Activated naive CD4-positive, alpha-beta T cell treated with anti-CD3 and anti-CD28 coated beads for 36 hours (primary cell): ENCODE measurements at regions of chr6 and their contacts with region 1.

Region 1: GRCh38 chr6:137944793-137945498 is 77.9 kb downstream of the TNFAIP3 start:
- DNase-seq: peak; percentile 46
- H3K4me3 Mint-ChIP-seq: no peak overlapping the region
- H3K27ac Mint-ChIP-seq: peak overlapping the region; percentile 0
- H3K4me1 Mint-ChIP-seq: peaks cover 56% of the 10 kb centered on the region
- H3K27me3 Mint-ChIP-seq: no peaks in the 10 kb centered on the region

Region 2: GRCh38 chr6:137707590-137708360 is 237.2 kb before region 1 on chr6:
- CTCF ChIA-PET with region 1: interaction called, 20 read pairs
- intact Hi-C with region 1: loop called (anchors 1 kb)
- DNase-seq: peak; percentile 89
- H3K4me3 Mint-ChIP-seq: peak overlapping the region; percentile 58
- H3K27ac Mint-ChIP-seq: peak overlapping the region; percentile 86
- H3K4me1 Mint-ChIP-seq: peaks cover 58% of the 10 kb centered on the region
- H3K27me3 Mint-ChIP-seq: no peaks in the 10 kb centered on the region

Region 3: GRCh38 chr6:137873273-137873762 is 71.6 kb before region 1 on chr6:
- CTCF ChIA-PET with region 1: interaction called, 161 read pairs
- intact Hi-C with region 1: loop called (anchors 1 kb)
- DNase-seq: peak; percentile 97
- H3K4me3 Mint-ChIP-seq: peak overlapping the region; percentile 89
- H3K27ac Mint-ChIP-seq: peak overlapping the region; percentile 99
- H3K4me1 Mint-ChIP-seq: peaks cover 37% of the 10 kb centered on the region
- H3K27me3 Mint-ChIP-seq: no peaks in the 10 kb centered on the region

Region 4: GRCh38 chr6:137910424-137910834 is 34.5 kb before region 1 on chr6:
- CTCF ChIA-PET with region 1: interaction called, 11 read pairs
- intact Hi-C with region 1: loop called (anchors 1 kb)
- DNase-seq: no peak
- H3K4me3 Mint-ChIP-seq: no peak overlapping the region
- H3K27ac Mint-ChIP-seq: no peak overlapping the region
- H3K4me1 Mint-ChIP-seq: peaks cover 57% of the 10 kb centered on the region
- H3K27me3 Mint-ChIP-seq: no peaks in the 10 kb centered on the region

Region 5: GRCh38 chr6:137967689-137968454 is 22.9 kb after region 1 on chr6:
- CTCF ChIA-PET with region 1: interaction called, 17 read pairs
- intact Hi-C with region 1: loop called (anchors 1 kb)
- DNase-seq: peak; percentile 18
- H3K4me3 Mint-ChIP-seq: no peak overlapping the region
- H3K27ac Mint-ChIP-seq: peak overlapping the region; percentile 85
- H3K4me1 Mint-ChIP-seq: peaks cover 52% of the 10 kb centered on the region
- H3K27me3 Mint-ChIP-seq: no peaks in the 10 kb centered on the region